Activated naive CD4-positive, alpha-beta T cell treated with anti-CD3 and anti-CD28 coated beads for 36 hours (primary cell): ENCODE measurements at regions of chr6 and their contacts with region 1.

Region 1: GRCh38 chr6:49462927-49463611 is at the starts of genes CENPQ and MMUT:
- DNase-seq: peak; percentile 96
- H3K4me3 Mint-ChIP-seq: peak within 1 kb of the TSS; percentile 96
- H3K27ac Mint-ChIP-seq: peak within 1 kb of the TSS; percentile 89
- H3K4me1 Mint-ChIP-seq: peaks cover 41% of the 10 kb centered on the region
- H3K27me3 Mint-ChIP-seq: no peaks in the 10 kb centered on the region
- total RNA-seq, gene CENPQ: 19.3 to 19.9 TPM
- total RNA-seq, gene MMUT: 15.1 to 15.2 TPM

Region 2: GRCh38 chr6:49479308-49479970 is 16.4 kb after region 1 on chr6:
- CTCF ChIA-PET with region 1: no interaction called
- intact Hi-C with region 1: no loop called
- DNase-seq: no peak
- H3K4me3 Mint-ChIP-seq: no peak overlapping the region
- H3K27ac Mint-ChIP-seq: no peak overlapping the region
- H3K4me1 Mint-ChIP-seq: no peaks in the 10 kb centered on the region
- H3K27me3 Mint-ChIP-seq: no peaks in the 10 kb centered on the region

Region 3: DNA sequence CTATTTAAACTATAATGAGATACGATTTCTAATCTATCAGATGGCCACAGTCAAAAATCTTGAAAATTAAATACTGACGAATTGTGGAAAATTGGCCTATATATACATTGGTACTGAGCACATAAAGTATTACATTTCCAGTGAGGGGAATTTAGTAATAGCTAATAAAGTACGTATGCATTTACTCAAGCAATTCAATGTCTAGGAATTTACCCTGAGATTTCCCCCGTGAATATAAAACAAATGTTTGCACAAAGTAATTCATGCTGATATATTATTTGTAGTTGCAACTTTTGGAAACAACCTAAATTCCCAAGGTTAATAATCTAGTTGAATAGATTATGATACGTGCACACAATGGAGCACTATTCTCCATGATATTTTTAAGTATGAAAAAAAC is 72.7 kb after region 1 on chr6:
- CTCF ChIA-PET with region 1: no interaction called
- intact Hi-C with region 1: no loop called
- DNase-seq: no peak
- H3K4me3 Mint-ChIP-seq: no peak overlapping the region
- H3K27ac Mint-ChIP-seq: no peak overlapping the region
- H3K4me1 Mint-ChIP-seq: no peaks in the 10 kb centered on the region
- H3K27me3 Mint-ChIP-seq: no peaks in the 10 kb centered on the region

Region 4: DNA sequence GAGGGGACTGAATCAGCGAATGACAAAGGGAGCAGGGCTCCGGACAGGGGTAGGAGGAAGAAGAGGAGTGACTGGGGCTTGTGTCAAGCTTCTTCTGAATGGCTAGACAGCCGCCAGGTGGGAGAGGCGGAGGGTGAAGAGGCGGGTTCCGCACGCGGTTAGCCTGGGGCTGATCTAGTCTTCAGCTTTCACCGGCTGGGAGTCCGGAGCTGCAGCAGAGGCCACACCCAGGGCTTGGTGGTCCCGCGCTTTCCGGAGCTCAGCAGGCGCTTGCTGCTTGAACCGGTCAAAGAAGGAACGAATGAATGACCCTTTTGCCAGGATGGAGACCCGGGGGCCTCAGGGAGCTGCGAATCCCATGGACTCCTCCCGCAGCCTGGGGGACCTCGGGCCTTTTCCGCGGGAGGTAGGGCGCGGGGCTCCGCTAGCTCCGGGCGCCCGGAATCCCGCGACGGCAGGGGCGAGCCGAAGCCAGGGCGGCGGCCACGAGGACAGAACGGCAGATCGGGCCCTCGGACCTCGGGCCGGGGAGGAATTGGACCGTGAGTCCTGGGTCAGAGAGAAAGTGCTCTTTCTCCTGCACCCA is 87.5 kb after region 1 on chr6 and contains the start of gene C6orf141:
- CTCF ChIA-PET with region 1: no interaction called
- intact Hi-C with region 1: loop called (anchors 1 kb)
- DNase-seq: peak; percentile 50
- H3K4me3 Mint-ChIP-seq: peak within 1 kb of the TSS; percentile 61
- H3K27ac Mint-ChIP-seq: no peak within 1 kb of the TSS
- H3K4me1 Mint-ChIP-seq: peaks cover 28% of the 10 kb centered on the region
- H3K27me3 Mint-ChIP-seq: peaks cover 29% of the 10 kb centered on the region
- total RNA-seq, gene C6orf141: 0.42 to 0.91 TPM

Region 5: GRCh38 chr6:49606696-49607390 is 143.8 kb after region 1 on chr6:
- CTCF ChIA-PET with region 1: no interaction called
- intact Hi-C with region 1: loop called (anchors 2 kb)
- DNase-seq: peak; percentile 26
- H3K4me3 Mint-ChIP-seq: no peak overlapping the region
- H3K27ac Mint-ChIP-seq: no peak overlapping the region
- H3K4me1 Mint-ChIP-seq: no peaks in the 10 kb centered on the region
- H3K27me3 Mint-ChIP-seq: peaks cover 10% of the 10 kb centered on the region

Region 6: DNA sequence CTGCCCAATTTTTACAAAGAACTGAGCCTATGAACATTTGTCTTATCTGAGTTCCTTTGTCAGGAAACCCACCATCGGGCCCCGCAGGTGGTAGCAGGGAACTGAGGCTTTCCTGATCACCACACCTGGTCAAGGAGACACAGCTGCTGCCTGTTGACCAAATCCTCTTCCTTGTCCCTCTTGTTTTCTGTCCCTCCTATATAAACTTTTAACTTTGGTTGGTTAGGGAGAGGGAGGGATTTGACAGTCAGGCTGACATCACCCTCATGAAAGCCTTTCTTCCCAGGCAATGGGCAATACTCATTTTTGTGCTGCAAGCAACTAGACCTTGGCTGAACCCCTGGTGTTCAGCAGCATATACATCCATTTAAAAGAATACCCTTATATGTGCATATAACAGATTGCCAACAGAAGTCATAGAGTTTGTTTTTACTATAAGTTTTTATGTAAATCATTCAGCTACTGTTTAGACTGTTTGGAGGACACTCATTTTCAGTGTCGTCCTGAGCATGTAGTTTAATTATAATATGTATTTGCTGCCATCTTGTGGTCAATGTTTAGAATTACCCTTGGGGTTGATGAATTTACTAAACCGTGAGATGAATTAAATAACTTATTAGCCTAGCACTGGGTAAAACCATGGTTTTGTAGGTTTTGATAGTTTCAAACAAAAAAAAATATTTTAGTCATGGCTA is 386.3 kb after region 1 on chr6:
- CTCF ChIA-PET with region 1: no interaction called
- intact Hi-C with region 1: loop called (anchors 5 kb)
- DNase-seq: no peak
- H3K4me3 Mint-ChIP-seq: no peak overlapping the region
- H3K27ac Mint-ChIP-seq: no peak overlapping the region
- H3K4me1 Mint-ChIP-seq: no peaks in the 10 kb centered on the region
- H3K27me3 Mint-ChIP-seq: peaks cover 2% of the 10 kb centered on the region